Activated CD4-positive, alpha-beta memory T cell treated with anti-CD3 and anti-CD28 coated beads for 36 hours (primary cell): ENCODE measurements at regions of chr3 and their contacts with region 1.

Region 1: DNA sequence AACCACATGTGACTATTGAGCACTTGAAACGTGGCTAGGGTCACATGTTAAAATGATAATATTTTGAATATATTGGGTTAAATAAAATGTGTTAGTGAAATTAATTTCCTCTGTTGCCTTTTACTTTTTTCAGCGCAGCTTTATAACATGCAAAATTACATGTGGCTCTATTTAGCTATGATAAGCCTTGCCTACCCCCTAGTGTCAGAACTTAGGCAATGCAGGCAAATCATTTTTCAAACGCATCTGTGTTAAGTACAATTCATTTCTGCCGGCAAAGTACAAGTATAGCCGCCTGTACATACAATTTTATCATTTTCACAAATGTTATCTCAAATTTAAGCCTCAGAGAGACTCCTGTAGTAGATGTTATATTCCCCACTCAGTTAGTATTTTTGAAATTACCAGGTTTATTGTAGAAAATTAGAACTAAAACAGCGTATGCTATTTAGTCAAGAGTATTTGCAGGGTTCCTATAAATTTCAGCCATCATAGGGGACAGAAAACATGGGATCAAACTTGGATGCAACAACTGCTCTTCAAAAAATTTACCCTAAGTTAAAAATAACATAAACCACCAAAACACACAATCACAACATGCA is 56.1 kb downstream of the TAFA4 start:
- DNase-seq: peak; percentile 23
- H3K4me3 Mint-ChIP-seq: no peak overlapping the region
- H3K27ac Mint-ChIP-seq: no peak overlapping the region
- H3K4me1 Mint-ChIP-seq: no peaks in the 10 kb centered on the region
- H3K27me3 Mint-ChIP-seq: peaks cover 9% of the 10 kb centered on the region

Region 2: GRCh38 chr3:67113802-67114407 is 1762.3 kb before region 1 on chr3:
- CTCF ChIA-PET with region 1: interaction called, 62 read pairs
- POLR2A ChIA-PET with region 1: no interaction called
- intact Hi-C with region 1: loop called (anchors 1 kb)
- DNase-seq: peak; percentile 91
- H3K4me3 Mint-ChIP-seq: no peak overlapping the region
- H3K27ac Mint-ChIP-seq: peak overlapping the region; percentile 13
- H3K4me1 Mint-ChIP-seq: peaks cover 6% of the 10 kb centered on the region
- H3K27me3 Mint-ChIP-seq: peaks cover 22% of the 10 kb centered on the region

Region 3: GRCh38 chr3:67790043-67790442 is 1086.2 kb before region 1 on chr3:
- CTCF ChIA-PET with region 1: interaction called, 3 read pairs
- POLR2A ChIA-PET with region 1: no interaction called
- intact Hi-C with region 1: loop called (anchors 10 kb)
- DNase-seq: peak; percentile 73
- H3K4me3 Mint-ChIP-seq: no peak overlapping the region
- H3K27ac Mint-ChIP-seq: no peak overlapping the region
- H3K4me1 Mint-ChIP-seq: peaks cover 5% of the 10 kb centered on the region
- H3K27me3 Mint-ChIP-seq: no peaks in the 10 kb centered on the region

Region 4: GRCh38 chr3:67901681-67902080 is 974.5 kb before region 1 on chr3:
- CTCF ChIA-PET with region 1: no interaction called
- POLR2A ChIA-PET with region 1: no interaction called
- intact Hi-C with region 1: loop called (anchors 1 kb)
- DNase-seq: no peak
- H3K4me3 Mint-ChIP-seq: no peak overlapping the region
- H3K27ac Mint-ChIP-seq: no peak overlapping the region
- H3K4me1 Mint-ChIP-seq: peaks cover 8% of the 10 kb centered on the region
- H3K27me3 Mint-ChIP-seq: no peaks in the 10 kb centered on the region